Activated CD4-positive, alpha-beta T cell treated with anti-CD3 and anti-CD28 coated beads for 36 hours (primary cell): ENCODE measurements at regions of chr18 and their contacts with region 1.

Region 1: DNA sequence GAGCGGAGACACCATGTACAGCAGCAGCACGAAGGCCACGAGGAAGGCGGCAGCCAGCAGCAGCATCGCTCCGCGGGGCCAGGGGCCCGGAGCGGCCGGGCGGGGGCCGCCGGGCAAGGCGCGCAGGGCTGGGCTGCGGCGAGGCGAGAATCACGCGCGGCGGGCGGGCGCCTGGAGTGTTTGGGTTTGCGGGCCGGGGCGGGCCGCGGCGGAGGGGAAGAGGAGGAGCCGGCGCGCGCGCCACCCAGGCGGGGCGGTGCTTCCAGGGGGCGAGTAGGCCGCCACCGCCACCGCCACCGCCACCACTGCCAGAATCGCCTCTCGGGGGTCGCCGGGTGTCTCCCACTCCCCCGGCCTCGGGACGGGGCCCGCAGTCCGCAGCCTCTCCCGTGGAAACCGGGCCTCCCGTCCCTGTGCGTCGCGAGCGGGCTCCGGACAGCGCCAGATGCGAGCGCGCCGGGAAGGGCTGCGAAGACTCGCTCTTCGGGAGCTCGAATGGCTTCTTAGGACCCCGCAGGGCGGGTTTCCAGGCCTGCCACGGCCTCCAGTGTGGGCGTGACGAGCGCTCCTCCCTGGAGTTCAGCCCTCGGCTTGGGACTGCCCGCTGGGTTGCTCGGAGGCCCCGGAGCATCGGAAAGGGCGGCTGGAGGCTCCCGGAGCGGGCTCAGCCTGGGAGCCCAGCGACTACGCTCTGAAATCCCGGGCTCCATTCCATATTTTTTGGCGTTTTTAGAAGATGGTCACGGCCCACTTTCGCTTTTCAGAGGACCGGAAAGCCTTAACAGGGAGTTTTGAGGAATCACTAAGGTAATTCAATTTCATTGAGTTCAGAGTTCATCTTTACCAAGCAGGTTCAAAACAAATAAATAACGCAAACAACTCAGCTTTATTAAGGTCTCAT is at the start of gene KDSR:
- DNase-seq: peak; percentile 92
- ATAC-seq: peak; percentile 85
- H3K4me3 Mint-ChIP-seq: peak within 1 kb of the TSS; percentile 96
- H3K27ac Mint-ChIP-seq: peak within 1 kb of the TSS; percentile 85
- H3K4me1 Mint-ChIP-seq: peaks cover 36% of the 10 kb centered on the region
- H3K27me3 Mint-ChIP-seq: no peaks in the 10 kb centered on the region
- total RNA-seq, gene KDSR: 72.6 to 78.6 TPM

Region 2: GRCh38 chr18:63378919-63379638 is 11.8 kb after region 1 on chr18:
- CTCF ChIA-PET with region 1: interaction called, 4 read pairs
- POLR2A ChIA-PET with region 1: no interaction called
- intact Hi-C with region 1: loop called in 1 of 2 experiments (anchors 1 kb)
- DNase-seq: no peak
- ATAC-seq: peak; percentile 69
- H3K4me3 Mint-ChIP-seq: peak overlapping the region; percentile 46
- H3K27ac Mint-ChIP-seq: peak overlapping the region; percentile 79
- H3K4me1 Mint-ChIP-seq: peaks cover 22% of the 10 kb centered on the region
- H3K27me3 Mint-ChIP-seq: no peaks in the 10 kb centered on the region

Region 3: GRCh38 chr18:63402246-63403162 is 35.2 kb after region 1 on chr18:
- CTCF ChIA-PET with region 1: no interaction called
- POLR2A ChIA-PET with region 1: no interaction called
- intact Hi-C with region 1: loop called in 1 of 2 experiments (anchors 1 kb)
- DNase-seq: no peak
- ATAC-seq: no peak
- H3K4me3 Mint-ChIP-seq: no peak overlapping the region
- H3K27ac Mint-ChIP-seq: peak overlapping the region; percentile 69
- H3K4me1 Mint-ChIP-seq: peaks cover 8% of the 10 kb centered on the region
- H3K27me3 Mint-ChIP-seq: no peaks in the 10 kb centered on the region

Region 4: DNA sequence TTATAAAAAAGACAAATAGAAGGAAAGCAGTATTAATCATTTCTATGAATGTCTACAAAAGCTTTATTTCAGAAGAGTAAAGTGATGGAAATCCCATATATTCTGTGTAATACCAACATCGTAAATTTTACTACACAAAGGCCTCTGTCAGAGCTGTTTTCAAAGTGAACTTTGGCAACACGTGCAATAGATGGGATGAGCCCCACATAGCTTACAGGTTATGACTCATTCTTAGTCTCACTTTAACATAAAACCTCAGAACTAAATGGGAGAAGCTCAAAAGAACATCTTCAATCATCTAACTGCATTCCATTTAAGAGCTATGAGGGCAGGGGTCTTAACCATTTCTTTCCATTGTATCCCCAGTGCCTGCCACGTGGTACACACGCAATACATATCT is 43.5 kb after region 1 on chr18:
- CTCF ChIA-PET with region 1: interaction called, 3 read pairs
- POLR2A ChIA-PET with region 1: interaction called, 4 read pairs
- intact Hi-C with region 1: loop called in 1 of 2 experiments (anchors 2 kb)
- DNase-seq: no peak
- ATAC-seq: peak; percentile 91
- H3K4me3 Mint-ChIP-seq: no peak overlapping the region
- H3K27ac Mint-ChIP-seq: peak overlapping the region; percentile 2
- H3K4me1 Mint-ChIP-seq: peaks cover 43% of the 10 kb centered on the region
- H3K27me3 Mint-ChIP-seq: no peaks in the 10 kb centered on the region

Region 5: GRCh38 chr18:63422087-63422809 is 54.9 kb after region 1 on chr18 and contains the start of gene VPS4B:
- CTCF ChIA-PET with region 1: interaction called, 6 read pairs
- POLR2A ChIA-PET with region 1: interaction called, 8 read pairs
- intact Hi-C with region 1: loop called (anchors 1 kb)
- DNase-seq: peak; percentile 100
- ATAC-seq: peak; percentile 95
- H3K4me3 Mint-ChIP-seq: peak within 1 kb of the TSS; percentile 99
- H3K27ac Mint-ChIP-seq: peak within 1 kb of the TSS; percentile 95
- H3K4me1 Mint-ChIP-seq: peaks cover 30% of the 10 kb centered on the region
- H3K27me3 Mint-ChIP-seq: no peaks in the 10 kb centered on the region
- total RNA-seq, gene VPS4B: 40.7 to 48.4 TPM

Region 6: DNA sequence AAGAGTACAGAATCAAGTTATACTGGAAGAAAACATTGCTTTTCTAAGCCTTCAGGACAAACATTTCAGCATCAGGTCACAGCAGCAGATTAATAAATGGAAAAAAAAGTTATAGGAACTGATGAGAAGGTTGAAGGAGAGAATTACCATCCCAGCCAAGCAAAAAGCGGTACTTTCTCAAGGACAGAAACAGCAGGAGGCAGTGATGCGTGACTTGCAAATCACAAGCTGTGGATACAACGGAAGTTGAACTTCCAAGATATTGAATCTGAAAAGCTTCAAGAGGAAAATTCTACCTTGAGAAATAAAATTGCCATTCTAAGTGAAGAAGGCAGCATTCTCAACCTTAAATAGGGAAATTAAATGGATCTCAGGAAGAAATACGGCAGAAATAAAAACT is 156.4 kb after region 1 on chr18:
- CTCF ChIA-PET with region 1: no interaction called
- POLR2A ChIA-PET with region 1: no interaction called
- intact Hi-C with region 1: no loop called
- DNase-seq: no peak
- ATAC-seq: no peak
- H3K4me3 Mint-ChIP-seq: no peak overlapping the region
- H3K27ac Mint-ChIP-seq: no peak overlapping the region
- H3K4me1 Mint-ChIP-seq: no peaks in the 10 kb centered on the region
- H3K27me3 Mint-ChIP-seq: peaks cover 10% of the 10 kb centered on the region

Region 7: GRCh38 chr18:63637703-63638102 is 270.4 kb after region 1 on chr18:
- CTCF ChIA-PET with region 1: no interaction called
- POLR2A ChIA-PET with region 1: no interaction called
- intact Hi-C with region 1: no loop called
- DNase-seq: no peak
- ATAC-seq: no peak
- H3K4me3 Mint-ChIP-seq: no peak overlapping the region
- H3K27ac Mint-ChIP-seq: no peak overlapping the region
- H3K4me1 Mint-ChIP-seq: no peaks in the 10 kb centered on the region
- H3K27me3 Mint-ChIP-seq: no peaks in the 10 kb centered on the region

Region 8: GRCh38 chr18:63969960-63970802 is 602.9 kb after region 1 on chr18 and contains the start of gene SERPINB8:
- CTCF ChIA-PET with region 1: no interaction called
- POLR2A ChIA-PET with region 1: no interaction called
- intact Hi-C with region 1: loop called in 1 of 2 experiments (anchors 10 kb)
- DNase-seq: peak; percentile 92
- ATAC-seq: peak; percentile 90
- H3K4me3 Mint-ChIP-seq: peak within 1 kb of the TSS; percentile 85
- H3K27ac Mint-ChIP-seq: peak within 1 kb of the TSS; percentile 92
- H3K4me1 Mint-ChIP-seq: peaks cover 38% of the 10 kb centered on the region
- H3K27me3 Mint-ChIP-seq: no peaks in the 10 kb centered on the region
- total RNA-seq, gene SERPINB8: 16.0 to 17.1 TPM